Endothelial cell of umbilical vein (primary cell): ENCODE measurements at regions of chr9 and their contacts with region 1.

Region 1: GRCh38 chr9:76203373-76203772 is 190.9 kb downstream of the RFK start:
- DNase-seq: no peak
- H3K4me3 ChIP-seq: no peak overlapping the region
- H3K27ac ChIP-seq: no peak overlapping the region
- H3K4me1 ChIP-seq: no peaks in the 10 kb centered on the region
- H3K27me3 ChIP-seq: peaks cover 5 to 31% of the 10 kb centered on the region in 2 experiments
- CTCF ChIP-seq: no peak
- POLR2A ChIP-seq: no peak

Region 2: GRCh38 chr9:76143834-76144233 is 59.5 kb before region 1 on chr9:
- CTCF ChIA-PET with region 1: no interaction called
- POLR2A ChIA-PET with region 1: no interaction called
- dilution Hi-C with region 1: no loop called
- intact Hi-C with region 1: loop called (anchors 10 kb)
- DNase-seq: no peak
- H3K4me3 ChIP-seq: no peak overlapping the region
- H3K27ac ChIP-seq: no peak overlapping the region
- H3K4me1 ChIP-seq: no peaks in the 10 kb centered on the region
- H3K27me3 ChIP-seq: no peaks in the 10 kb centered on the region
- CTCF ChIP-seq: no peak
- POLR2A ChIP-seq: no peak

Region 3: DNA sequence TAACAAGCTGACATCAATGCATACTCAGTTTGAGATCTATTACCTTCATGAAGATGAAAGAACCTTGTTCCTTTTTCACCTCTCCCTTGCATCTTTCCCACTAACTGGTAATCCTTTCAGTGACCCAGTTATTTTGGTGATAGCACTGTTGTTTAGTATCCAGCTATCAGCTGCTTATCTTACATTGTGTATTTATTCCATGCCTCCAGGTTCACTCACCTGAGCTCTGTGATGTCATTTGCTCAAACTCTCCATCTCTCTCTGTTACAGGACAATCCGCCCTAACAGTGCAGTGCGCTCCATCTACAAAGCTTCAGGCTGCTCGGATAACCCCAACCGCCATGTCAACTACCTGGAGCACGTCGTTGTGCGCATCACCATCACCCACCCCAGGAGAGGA is 44.7 kb before region 1 on chr9:
- CTCF ChIA-PET with region 1: no interaction called
- POLR2A ChIA-PET with region 1: no interaction called
- dilution Hi-C with region 1: no loop called
- intact Hi-C with region 1: no loop called
- DNase-seq: no peak
- H3K4me3 ChIP-seq: no peak overlapping the region
- H3K27ac ChIP-seq: no peak overlapping the region
- H3K4me1 ChIP-seq: no peaks in the 10 kb centered on the region
- H3K27me3 ChIP-seq: no peaks in the 10 kb centered on the region
- CTCF ChIP-seq: no peak
- POLR2A ChIP-seq: no peak

Region 4: DNA sequence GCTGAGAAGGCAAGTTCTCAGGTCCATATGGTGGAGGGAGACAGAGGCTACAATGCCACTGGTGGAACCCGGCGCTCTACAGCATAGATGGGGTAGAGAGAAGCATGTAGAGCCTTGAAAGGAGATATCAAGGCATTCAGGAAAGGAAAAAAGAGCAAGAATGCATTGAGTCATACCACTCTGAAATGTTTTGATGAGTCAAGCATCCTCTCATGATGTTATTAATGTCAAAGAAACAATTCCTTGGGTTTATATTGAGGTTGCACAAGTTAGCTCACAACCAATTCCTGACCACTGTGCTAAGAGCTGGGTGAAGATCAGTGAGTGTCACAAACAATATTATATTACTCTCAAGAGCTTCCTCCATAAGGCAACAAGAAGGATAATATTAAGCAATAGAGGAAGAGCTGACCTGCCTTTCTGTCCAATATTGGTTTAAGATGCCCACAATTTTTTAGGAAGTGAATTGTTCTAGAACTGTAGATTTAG is 12.8 kb after region 1 on chr9:
- CTCF ChIA-PET with region 1: interaction called, 4 read pairs
- POLR2A ChIA-PET with region 1: no interaction called
- dilution Hi-C with region 1: no loop called
- intact Hi-C with region 1: loop called (anchors 1 kb)
- DNase-seq: peak; percentile 84
- H3K4me3 ChIP-seq: no peak overlapping the region
- H3K27ac ChIP-seq: no peak overlapping the region
- H3K4me1 ChIP-seq: peaks cover 17% of the 10 kb centered on the region
- H3K27me3 ChIP-seq: peaks cover 16 to 39% of the 10 kb centered on the region in 2 experiments
- CTCF ChIP-seq: no peak
- POLR2A ChIP-seq: no peak